ENCODE measurements at regions of chr4 and their contacts with region 1.

Region 1: DNA sequence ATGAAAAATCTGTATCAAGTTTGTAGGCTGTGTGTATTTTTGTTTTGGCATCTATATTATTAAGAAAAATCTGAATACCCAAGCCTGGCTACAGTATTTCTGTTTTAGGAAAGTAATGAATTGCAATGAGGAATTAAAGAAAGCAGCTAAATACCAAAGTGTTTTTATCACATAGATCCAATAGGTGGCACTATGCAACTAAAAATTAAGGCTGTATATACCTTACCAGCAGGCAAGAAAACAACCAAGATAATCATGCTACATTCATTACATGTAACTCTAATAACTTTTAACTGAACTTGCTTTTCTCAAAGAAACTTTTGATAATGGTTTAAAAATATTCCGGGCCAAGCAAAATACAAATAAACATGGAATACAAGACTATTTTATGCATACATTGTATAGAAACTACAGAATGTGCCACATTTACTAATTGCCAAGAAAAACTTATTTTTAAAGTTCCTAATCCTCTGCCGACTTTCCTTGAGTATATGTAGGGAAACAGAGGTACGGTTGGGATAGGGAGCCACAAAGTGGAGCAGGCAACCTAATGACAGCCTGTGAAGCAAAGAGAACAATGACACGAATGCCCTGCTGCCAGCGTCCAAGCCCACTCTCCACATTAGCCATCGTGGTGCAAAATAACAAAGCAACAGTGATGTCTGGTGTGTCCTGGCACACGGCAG is 63.7 kb downstream of the SEC24D start:
- DNase-seq: peak in 1 of 35 experiments; percentile 64
- ATAC-seq: peak; percentile 54 to 74 (median 64)
- H3K4me3 ChIP-seq: no peak overlapping the region
- H3K4me3 Mint-ChIP-seq: no peak overlapping the region
- H3K27ac ChIP-seq: no peak overlapping the region
- H3K27ac Mint-ChIP-seq: no peak overlapping the region
- H3K4me1 ChIP-seq: no peaks in the 10 kb centered on the region
- H3K4me1 Mint-ChIP-seq: no peaks in the 10 kb centered on the region
- H3K27me3 ChIP-seq: no peaks in the 10 kb centered on the region
- H3K27me3 Mint-ChIP-seq: no peaks in the 10 kb centered on the region

Region 2: GRCh38 chr4:118557298-118557851 is 214.8 kb before region 1 on chr4:
- CTCF ChIA-PET with region 1: no interaction called
- POLR2A ChIA-PET with region 1: no interaction called
- DNase-seq: peak in 1 of 35 experiments; percentile 1
- ATAC-seq: no peak
- H3K4me3 ChIP-seq: no peak overlapping the region
- H3K4me3 Mint-ChIP-seq: no peak overlapping the region
- H3K27ac ChIP-seq: no peak overlapping the region
- H3K27ac Mint-ChIP-seq: no peak overlapping the region
- H3K4me1 ChIP-seq: no peaks in the 10 kb centered on the region
- H3K4me1 Mint-ChIP-seq: no peaks in the 10 kb centered on the region
- H3K27me3 ChIP-seq: no peaks in the 10 kb centered on the region
- H3K27me3 Mint-ChIP-seq: peaks cover 9 to 16% of the 10 kb centered on the region in 2 donors

Region 3: GRCh38 chr4:118865091-118865708 is 93.0 kb after region 1 on chr4:
- CTCF ChIA-PET with region 1: interaction called, 7 to 15 read pairs
- POLR2A ChIA-PET with region 1: no interaction called
- DNase-seq: peak in 5 of 35 experiments; percentile 1 to 47 (median 5)
- ATAC-seq: peak in 3 of 4 experiments; percentile 49 to 70 (median 50)
- H3K4me3 ChIP-seq: no peak overlapping the region
- H3K4me3 Mint-ChIP-seq: no peak overlapping the region
- H3K27ac ChIP-seq: no peak overlapping the region
- H3K27ac Mint-ChIP-seq: no peak overlapping the region
- H3K4me1 ChIP-seq: no peaks in the 10 kb centered on the region
- H3K4me1 Mint-ChIP-seq: peaks cover 0 to 2% (median 0%) of the 10 kb centered on the region in 3 donors
- H3K27me3 ChIP-seq: no peaks in the 10 kb centered on the region
- H3K27me3 Mint-ChIP-seq: peaks cover 0 to 6% of the 10 kb centered on the region in 2 donors

Region 4: DNA sequence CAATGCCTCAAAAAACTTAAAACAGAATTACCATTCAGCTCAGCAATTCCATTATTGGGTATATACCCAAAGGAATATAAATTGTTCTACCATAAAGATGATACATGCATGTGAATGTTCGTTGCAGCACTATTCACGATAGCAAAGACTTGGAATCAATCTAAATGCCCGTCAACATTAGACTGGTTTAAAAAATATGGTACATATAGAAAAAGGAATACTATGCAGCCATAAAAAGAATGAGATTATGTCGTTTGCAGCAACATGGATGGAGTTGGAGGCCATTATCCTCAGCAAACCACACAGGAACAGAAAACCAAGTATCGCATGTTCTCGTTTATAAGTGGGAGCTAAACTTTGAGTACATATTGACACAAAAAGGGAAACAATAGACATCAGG is 105.6 kb after region 1 on chr4:
- CTCF ChIA-PET with region 1: no interaction called
- POLR2A ChIA-PET with region 1: no interaction called
- DNase-seq: no peak
- ATAC-seq: no peak
- H3K4me3 ChIP-seq: no peak overlapping the region
- H3K4me3 Mint-ChIP-seq: no peak overlapping the region
- H3K27ac ChIP-seq: no peak overlapping the region
- H3K27ac Mint-ChIP-seq: no peak overlapping the region
- H3K4me1 ChIP-seq: no peaks in the 10 kb centered on the region
- H3K4me1 Mint-ChIP-seq: no peaks in the 10 kb centered on the region
- H3K27me3 ChIP-seq: peaks cover 0 to 8% of the 10 kb centered on the region in 2 experiments
- H3K27me3 Mint-ChIP-seq: peaks cover 0 to 25% of the 10 kb centered on the region in 2 donors

Region 5: GRCh38 chr4:118888666-118889311 is 116.6 kb after region 1 on chr4 and contains the start of gene SYNPO2:
- CTCF ChIA-PET with region 1: interaction called, 20 to 53 read pairs
- POLR2A ChIA-PET with region 1: interaction called in 1 of 2 experiments, 11 read pairs
- DNase-seq: peak in 13 of 35 experiments; percentile 2 to 29 (median 9)
- ATAC-seq: peak; percentile 65 to 78 (median 74)
- H3K4me3 ChIP-seq: peak within 1 kb of the TSS in 1 of 2 donors; percentile 55
- H3K4me3 Mint-ChIP-seq: peak within 1 kb of the TSS; percentile 43 to 81 (median 73)
- H3K27ac ChIP-seq: no peak within 1 kb of the TSS
- H3K27ac Mint-ChIP-seq: peak within 1 kb of the TSS in 1 of 2 donors; percentile 55
- H3K4me1 ChIP-seq: peaks cover 0 to 8% of the 10 kb centered on the region in 2 experiments
- H3K4me1 Mint-ChIP-seq: peaks cover 14 to 20% (median 19%) of the 10 kb centered on the region in 3 donors
- H3K27me3 ChIP-seq: peaks cover 3 to 9% of the 10 kb centered on the region in 2 experiments
- H3K27me3 Mint-ChIP-seq: peaks cover 31 to 33% of the 10 kb centered on the region in 2 donors
- total RNA-seq, gene SYNPO2: 0.21 to 1.6 (median 1.2) TPM